SK-N-SH (cell line): ENCODE measurements at regions of chr3 and their contacts with region 1.

Region 1: DNA sequence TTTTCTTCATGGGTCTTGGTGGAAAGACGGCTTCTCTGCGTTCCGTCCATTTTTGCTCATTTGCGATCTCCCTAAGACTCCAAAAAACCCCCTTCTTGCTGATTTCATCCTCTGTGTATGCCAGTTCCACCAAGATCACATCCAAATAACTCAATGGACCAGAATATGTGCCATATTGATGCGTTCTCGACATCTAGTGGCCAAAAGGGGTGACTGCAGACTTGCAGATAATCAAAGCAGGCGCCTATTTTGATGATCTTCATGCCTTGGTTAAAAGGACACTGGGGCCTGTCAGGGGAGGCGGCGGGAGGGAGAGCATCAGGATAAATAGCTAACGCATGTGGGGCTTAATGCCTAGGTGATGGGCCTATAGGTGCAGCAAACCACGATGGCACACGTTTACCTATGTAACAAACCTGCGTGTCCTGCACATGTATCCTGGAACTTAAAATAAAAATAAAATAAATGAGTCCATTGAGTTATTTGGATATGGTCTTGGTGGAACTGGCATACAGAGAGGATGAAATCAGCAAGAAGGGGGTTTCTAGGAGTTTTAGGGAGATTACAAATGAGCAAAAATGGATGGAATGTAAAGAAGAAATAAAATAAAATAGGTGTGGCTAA is 104.2 kb upstream of the RAD18 start:
- DNase-seq: peak; percentile 69
- H3K4me3 ChIP-seq: peak overlapping the region in 1 of 2 experiments; percentile 26; a peak in 1 of 4 replicates
- H3K27ac ChIP-seq: no peak overlapping the region
- H3K4me1 ChIP-seq: no peaks in the 10 kb centered on the region; a peak in 1 of 4 replicates
- H3K27me3 ChIP-seq: no peaks in the 10 kb centered on the region
- CTCF ChIP-seq: peak; percentile 91
- EP300 ChIP-seq: no peak
- RAD21 ChIP-seq: peak; percentile 98

Region 2: GRCh38 chr3:8629151-8630021 is 438.1 kb before region 1 on chr3:
- CTCF ChIA-PET with region 1: no interaction called
- POLR2A ChIA-PET with region 1: no interaction called
- DNase-seq: no peak
- H3K4me3 ChIP-seq: no peak overlapping the region
- H3K27ac ChIP-seq: no peak overlapping the region
- H3K4me1 ChIP-seq: peaks cover 0 to 17% of the 10 kb centered on the region in 2 experiments; a peak in 1 of 4 replicates
- H3K27me3 ChIP-seq: no peaks in the 10 kb centered on the region
- CTCF ChIP-seq: no peak
- EP300 ChIP-seq: no peak
- RAD21 ChIP-seq: no peak

Region 3: GRCh38 chr3:8800016-8800415 is 267.4 kb before region 1 on chr3:
- CTCF ChIA-PET with region 1: no interaction called
- POLR2A ChIA-PET with region 1: no interaction called
- DNase-seq: no peak
- H3K4me3 ChIP-seq: no peak overlapping the region
- H3K27ac ChIP-seq: no peak overlapping the region
- H3K4me1 ChIP-seq: no peaks in the 10 kb centered on the region
- H3K27me3 ChIP-seq: no peaks in the 10 kb centered on the region
- CTCF ChIP-seq: no peak
- EP300 ChIP-seq: no peak
- RAD21 ChIP-seq: no peak

Region 4: DNA sequence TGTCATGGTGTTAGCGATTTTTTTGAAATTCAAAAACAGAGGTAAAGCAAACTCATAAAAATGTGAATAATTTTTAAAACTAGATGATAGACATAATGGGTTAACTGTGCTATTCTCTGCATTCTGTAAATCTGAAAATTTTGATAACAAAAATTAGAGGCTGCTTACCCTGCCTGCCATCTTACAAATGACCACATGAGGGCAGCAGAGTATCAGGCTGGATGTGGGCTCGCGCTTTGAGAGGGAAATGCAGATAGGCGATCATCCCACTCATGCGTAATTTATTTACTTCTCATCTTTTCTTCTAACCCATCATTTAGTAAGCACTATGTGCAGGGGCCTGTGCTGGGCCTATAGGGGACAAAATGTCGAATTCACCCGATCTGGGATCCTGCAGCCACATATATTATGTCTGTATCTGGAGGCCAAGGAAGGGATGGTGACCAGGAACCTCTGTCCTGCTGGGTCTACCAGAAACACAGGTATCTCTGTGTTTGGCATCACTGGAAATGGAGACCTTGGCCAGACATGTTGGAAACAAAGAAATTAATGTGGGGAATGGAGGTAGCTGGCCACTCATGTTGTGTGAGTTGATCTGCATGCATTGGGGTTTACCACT is 96.4 kb before region 1 on chr3:
- CTCF ChIA-PET with region 1: interaction called, 16 read pairs
- POLR2A ChIA-PET with region 1: no interaction called
- DNase-seq: peak; percentile 69
- H3K4me3 ChIP-seq: peak overlapping the region in 1 of 2 experiments; percentile 13; a peak in 1 of 4 replicates
- H3K27ac ChIP-seq: no peak overlapping the region
- H3K4me1 ChIP-seq: peaks cover 0 to 4% of the 10 kb centered on the region in 2 experiments; a peak in 1 of 4 replicates
- H3K27me3 ChIP-seq: no peaks in the 10 kb centered on the region
- CTCF ChIP-seq: peak; percentile 98
- EP300 ChIP-seq: no peak
- RAD21 ChIP-seq: peak; percentile 97

Region 5: GRCh38 chr3:8980756-8981257 is 86.7 kb before region 1 on chr3:
- CTCF ChIA-PET with region 1: interaction called, 150 read pairs
- POLR2A ChIA-PET with region 1: no interaction called
- DNase-seq: no peak
- H3K4me3 ChIP-seq: no peak overlapping the region
- H3K27ac ChIP-seq: no peak overlapping the region
- H3K4me1 ChIP-seq: peaks cover 0 to 2% of the 10 kb centered on the region in 2 experiments; a peak in 1 of 4 replicates
- H3K27me3 ChIP-seq: no peaks in the 10 kb centered on the region
- CTCF ChIP-seq: no peak
- EP300 ChIP-seq: no peak
- RAD21 ChIP-seq: no peak